Activated T-helper 1 cell treated with anti-CD3 and anti-CD28 coated beads, Interleukin-12 subunit alpha, Interleukin-12 subunit beta, Interleukin-2, Interleukin-4 antibody, amounts not matched to agents 30 ng/mL and 10 ng/mL and 1 ng/mL, durations not matched to agents 14 hours and 24 hours and 36 hours (primary cell): ENCODE measurements at regions of chr14 and their contacts with region 1.

Region 1: GRCh38 chr14:50532502-50533240 is at the start of gene MAP4K5:
- DNase-seq: peak; percentile 82
- H3K4me3 Mint-ChIP-seq: peak within 1 kb of the TSS; percentile 92
- H3K27ac Mint-ChIP-seq: peak within 1 kb of the TSS; percentile 79
- H3K4me1 Mint-ChIP-seq: peaks cover 42% of the 10 kb centered on the region
- H3K27me3 Mint-ChIP-seq: peaks cover 24% of the 10 kb centered on the region
- total RNA-seq, gene MAP4K5: 26.4 and 27.5 TPM in 2 replicates

Region 2: DNA sequence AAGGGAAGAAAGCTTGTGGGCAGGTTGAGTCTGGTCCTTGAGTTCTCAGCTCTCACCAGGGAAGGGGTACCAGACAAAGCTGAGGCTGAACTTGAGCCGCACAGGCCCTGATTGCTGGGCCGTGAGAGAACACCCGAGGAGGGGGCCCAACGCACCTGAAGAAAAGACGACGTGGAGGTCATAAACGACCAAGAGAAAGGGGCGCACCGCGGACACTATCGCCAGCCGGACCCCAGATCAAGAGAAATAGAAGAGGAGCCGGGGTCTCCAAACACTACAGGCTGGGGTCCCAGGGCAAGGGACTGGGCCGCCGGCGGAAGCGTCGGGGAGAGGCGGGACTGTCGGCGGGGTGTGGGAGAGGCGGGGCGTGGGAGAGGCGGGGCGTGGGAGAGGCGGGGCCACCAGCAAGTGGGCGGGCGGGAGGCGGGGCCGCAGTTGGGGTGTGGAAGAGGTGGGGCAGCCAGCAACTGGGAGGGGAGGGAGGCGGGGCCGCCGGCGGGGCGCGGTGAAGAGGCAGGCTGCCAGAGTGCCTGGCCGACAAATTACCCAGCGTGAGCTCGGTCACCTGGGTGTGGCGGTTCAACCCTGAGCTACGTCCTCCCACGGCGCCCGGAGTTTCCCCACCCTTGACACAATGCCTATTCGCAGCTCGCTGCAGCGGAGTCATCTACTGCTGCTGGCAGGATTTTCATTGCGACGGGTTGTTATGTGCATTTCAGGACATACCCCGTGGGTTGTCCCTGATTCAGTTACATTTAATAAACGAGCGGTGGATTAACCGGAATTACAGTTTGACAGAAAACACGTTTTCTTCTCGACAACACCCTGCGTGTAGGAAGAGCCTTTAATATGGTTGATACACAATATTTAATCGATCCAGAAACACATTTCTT is 664.6 kb before region 1 on chr14:
- intact Hi-C with region 1: loop called (anchors 2 kb)
- DNase-seq: peak; percentile 92
- H3K4me3 Mint-ChIP-seq: peak overlapping the region; percentile 93
- H3K27ac Mint-ChIP-seq: peak overlapping the region; percentile 97
- H3K4me1 Mint-ChIP-seq: peaks cover 20% of the 10 kb centered on the region
- H3K27me3 Mint-ChIP-seq: no peaks in the 10 kb centered on the region

Region 3: GRCh38 chr14:50191499-50191898 is 341.2 kb before region 1 on chr14:
- intact Hi-C with region 1: no loop called
- DNase-seq: no peak
- H3K4me3 Mint-ChIP-seq: no peak overlapping the region
- H3K27ac Mint-ChIP-seq: no peak overlapping the region
- H3K4me1 Mint-ChIP-seq: no peaks in the 10 kb centered on the region
- H3K27me3 Mint-ChIP-seq: no peaks in the 10 kb centered on the region

Region 4: DNA sequence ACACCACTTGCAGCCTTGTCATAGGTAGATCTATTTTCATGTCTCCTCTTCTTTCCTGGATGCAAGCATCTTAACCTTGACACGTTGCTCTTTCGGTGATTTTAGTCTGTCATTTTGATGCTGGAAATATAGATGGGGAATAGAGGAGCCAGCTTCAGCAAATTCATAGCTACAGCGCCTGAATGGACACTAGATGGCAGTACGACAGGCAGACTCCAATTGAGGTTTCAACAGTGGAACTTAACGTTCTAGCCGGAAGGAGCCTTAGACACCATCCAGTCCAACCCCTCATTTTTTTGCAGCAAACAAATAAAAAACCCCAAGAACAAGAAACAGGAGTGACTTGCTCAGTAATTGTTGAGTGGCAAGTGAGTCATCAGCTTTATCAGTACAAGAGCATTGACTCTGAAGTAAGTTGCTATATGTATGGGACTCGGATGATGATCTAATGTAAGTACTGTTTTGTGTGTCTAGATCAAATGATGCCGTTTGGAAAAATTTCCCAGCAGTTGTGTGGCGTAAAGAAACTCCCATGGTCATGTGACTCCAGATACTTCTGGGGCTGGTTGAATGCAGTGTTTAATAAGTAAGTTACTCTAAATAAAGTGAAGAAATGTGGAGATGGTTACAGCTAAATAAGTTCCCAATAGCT is 211.5 kb before region 1 on chr14:
- intact Hi-C with region 1: loop called (anchors 1 kb)
- DNase-seq: peak; percentile 68
- H3K4me3 Mint-ChIP-seq: no peak overlapping the region
- H3K27ac Mint-ChIP-seq: no peak overlapping the region
- H3K4me1 Mint-ChIP-seq: peaks cover 20% of the 10 kb centered on the region
- H3K27me3 Mint-ChIP-seq: no peaks in the 10 kb centered on the region

Region 5: DNA sequence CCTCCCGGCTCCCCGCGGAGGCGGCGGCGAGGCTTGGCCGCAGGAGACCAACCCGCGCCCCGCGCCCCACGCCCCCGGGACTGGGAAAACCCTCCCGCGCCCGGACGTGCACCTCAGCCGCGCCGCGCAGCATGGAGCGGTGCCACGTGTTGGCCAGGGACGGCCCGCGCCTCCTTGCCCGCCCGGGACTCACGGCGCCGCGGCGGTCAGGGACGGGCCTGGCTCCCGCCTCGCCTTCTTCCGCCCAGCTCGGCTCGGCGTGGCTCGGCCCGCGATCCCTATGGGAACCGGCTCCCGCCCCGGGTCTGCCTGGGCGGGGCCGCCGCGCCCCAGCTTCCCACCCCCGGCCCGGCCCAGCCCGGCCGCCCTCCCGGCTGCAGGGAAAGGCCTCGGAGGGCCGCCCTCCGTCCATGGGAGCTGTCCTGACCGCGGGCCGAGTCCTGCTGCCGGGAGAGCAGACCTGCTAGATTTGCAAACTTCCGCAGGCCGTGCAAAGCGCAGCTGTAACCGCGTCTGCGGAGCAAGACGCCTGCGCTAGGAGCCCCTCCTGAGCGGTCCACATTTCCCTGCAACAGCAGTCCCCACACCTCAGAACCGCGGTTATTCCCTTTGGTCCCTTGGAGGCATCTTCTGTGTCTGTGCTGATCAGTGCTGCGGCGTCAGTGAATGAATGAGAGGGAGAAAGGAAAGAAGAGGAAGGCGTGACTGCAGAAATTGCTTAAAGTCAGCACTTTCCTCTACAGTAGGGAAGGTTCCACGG is 135.9 kb before region 1 on chr14 and contains the start of gene CDKL1:
- intact Hi-C with region 1: loop called (anchors 1 kb)
- DNase-seq: peak; percentile 22
- H3K4me3 Mint-ChIP-seq: peak within 1 kb of the TSS; percentile 85
- H3K27ac Mint-ChIP-seq: peak within 1 kb of the TSS; percentile 79
- H3K4me1 Mint-ChIP-seq: peaks cover 14% of the 10 kb centered on the region
- H3K27me3 Mint-ChIP-seq: peaks cover 25% of the 10 kb centered on the region
- total RNA-seq, gene CDKL1: 2.4 and 2.5 TPM in 2 replicates

Region 6: GRCh38 chr14:50667996-50668825 is 135.5 kb after region 1 on chr14 and contains the start of gene SAV1:
- intact Hi-C with region 1: loop called (anchors 5 kb)
- DNase-seq: peak; percentile 20
- H3K4me3 Mint-ChIP-seq: peak within 1 kb of the TSS; percentile 86
- H3K27ac Mint-ChIP-seq: peak within 1 kb of the TSS; percentile 47
- H3K4me1 Mint-ChIP-seq: peaks cover 15% of the 10 kb centered on the region
- H3K27me3 Mint-ChIP-seq: peaks cover 10% of the 10 kb centered on the region
- total RNA-seq, gene SAV1: 10.3 and 12.3 TPM in 2 replicates